PC-3 (cell line): ENCODE measurements at regions of chr17 and their contacts with region 1.

Region 1: GRCh38 chr17:49191917-49192741 is 18.2 kb downstream of the GNGT2 start:
- DNase-seq: peak; percentile 97
- ATAC-seq: peak; percentile 55
- H3K4me3 ChIP-seq: peak overlapping the region; percentile 79
- H3K27ac ChIP-seq: peak overlapping the region; percentile 77
- H3K4me1 ChIP-seq: peaks cover 10% of the 10 kb centered on the region
- H3K27me3 ChIP-seq: no peaks in the 10 kb centered on the region
- CTCF ChIP-seq: peak; percentile 55

Region 2: DNA sequence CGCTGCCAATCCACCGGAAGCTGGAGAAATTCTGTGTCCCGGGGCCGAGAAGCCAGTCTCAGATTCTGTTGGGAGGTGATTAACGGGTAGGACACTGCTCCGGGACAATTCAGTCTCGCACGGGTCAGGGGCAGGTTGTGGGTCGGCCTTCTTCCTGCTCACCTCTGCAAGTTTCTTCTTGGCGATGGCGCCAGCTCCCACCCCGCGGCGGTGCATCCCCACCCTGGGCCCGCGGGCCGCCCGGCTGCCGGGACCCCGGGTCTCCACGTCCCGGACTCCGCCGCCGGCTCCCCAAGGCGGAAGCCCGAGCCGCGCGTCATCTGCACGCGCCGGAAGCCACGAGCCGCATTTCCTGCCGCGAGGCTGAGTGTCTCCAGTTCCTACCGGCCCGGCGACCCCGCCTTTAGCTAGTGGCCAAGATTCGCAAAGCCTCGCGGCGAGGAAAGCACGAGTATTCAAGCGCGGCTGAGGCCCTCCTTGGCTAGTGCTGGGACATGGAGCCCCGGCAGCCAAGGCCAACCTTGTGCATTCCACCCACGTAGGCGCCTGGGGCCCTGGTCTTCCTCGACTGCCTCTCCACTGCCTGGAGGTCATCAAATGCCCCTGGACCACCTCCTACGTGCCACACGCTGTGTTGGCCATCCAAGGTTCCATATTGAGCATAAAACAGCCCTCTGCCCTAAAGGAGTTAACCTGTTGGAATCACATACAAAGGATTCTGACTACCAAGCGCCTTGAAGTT is 247.4 kb before region 1 on chr17 and contains the start of gene SNF8:
- CTCF ChIA-PET with region 1: no interaction called
- POLR2A ChIA-PET with region 1: no interaction called
- intact Hi-C with region 1: loop called (anchors 5 kb)
- DNase-seq: peak; percentile 97
- ATAC-seq: peak; percentile 95
- H3K4me3 ChIP-seq: peak within 1 kb of the TSS; percentile 80
- H3K27ac ChIP-seq: peak within 1 kb of the TSS; percentile 50
- H3K4me1 ChIP-seq: peaks cover 13% of the 10 kb centered on the region
- H3K27me3 ChIP-seq: no peaks in the 10 kb centered on the region
- CTCF ChIP-seq: no peak
- total RNA-seq, gene SNF8: 278 TPM in 2 replicates

Region 3: DNA sequence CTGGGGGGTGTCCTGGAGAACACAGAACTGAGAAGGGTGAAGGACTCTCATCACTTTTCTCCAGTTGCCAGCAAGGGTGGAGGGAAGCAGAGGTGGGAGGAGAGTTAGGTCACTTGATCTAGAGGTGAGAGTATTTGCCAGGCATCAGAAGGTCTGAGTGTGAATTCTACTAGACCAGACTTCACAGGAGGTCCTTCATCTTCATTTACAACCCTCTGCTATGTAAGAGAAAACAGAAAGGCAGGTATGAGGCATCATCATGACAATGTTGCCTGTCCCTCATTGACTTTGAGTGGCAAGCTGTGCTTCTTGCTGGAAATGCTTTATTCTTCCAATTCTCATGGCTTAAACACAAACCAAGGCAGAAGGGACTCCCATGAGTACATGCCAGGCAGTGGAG is 105.5 kb before region 1 on chr17:
- CTCF ChIA-PET with region 1: no interaction called
- POLR2A ChIA-PET with region 1: no interaction called
- intact Hi-C with region 1: loop called (anchors 5 kb)
- DNase-seq: no peak
- ATAC-seq: no peak; the same call in 1 of the 2 replicates
- H3K4me3 ChIP-seq: no peak overlapping the region
- H3K27ac ChIP-seq: no peak overlapping the region
- H3K4me1 ChIP-seq: peaks cover 3% of the 10 kb centered on the region; the same call in 1 of the 2 replicates
- H3K27me3 ChIP-seq: no peaks in the 10 kb centered on the region
- CTCF ChIP-seq: no peak